Transverse colon (tissue), 4 donors: ENCODE measurements at regions of chr17 and their contacts with region 1.

Region 1: GRCh38 chr17:16129441-16130205 is 85.7 kb downstream of the NCOR1 start:
- DNase-seq: no peak
- H3K4me3 ChIP-seq: no peak overlapping the region
- H3K27ac ChIP-seq: no peak overlapping the region
- H3K4me1 ChIP-seq: peaks cover 0 to 3% (median 0%) of the 10 kb centered on the region in 4 donors
- H3K27me3 ChIP-seq: no peaks in the 10 kb centered on the region
- CTCF ChIP-seq: no peak
- EP300 ChIP-seq: no peak
- POLR2A ChIP-seq: no peak

Region 2: DNA sequence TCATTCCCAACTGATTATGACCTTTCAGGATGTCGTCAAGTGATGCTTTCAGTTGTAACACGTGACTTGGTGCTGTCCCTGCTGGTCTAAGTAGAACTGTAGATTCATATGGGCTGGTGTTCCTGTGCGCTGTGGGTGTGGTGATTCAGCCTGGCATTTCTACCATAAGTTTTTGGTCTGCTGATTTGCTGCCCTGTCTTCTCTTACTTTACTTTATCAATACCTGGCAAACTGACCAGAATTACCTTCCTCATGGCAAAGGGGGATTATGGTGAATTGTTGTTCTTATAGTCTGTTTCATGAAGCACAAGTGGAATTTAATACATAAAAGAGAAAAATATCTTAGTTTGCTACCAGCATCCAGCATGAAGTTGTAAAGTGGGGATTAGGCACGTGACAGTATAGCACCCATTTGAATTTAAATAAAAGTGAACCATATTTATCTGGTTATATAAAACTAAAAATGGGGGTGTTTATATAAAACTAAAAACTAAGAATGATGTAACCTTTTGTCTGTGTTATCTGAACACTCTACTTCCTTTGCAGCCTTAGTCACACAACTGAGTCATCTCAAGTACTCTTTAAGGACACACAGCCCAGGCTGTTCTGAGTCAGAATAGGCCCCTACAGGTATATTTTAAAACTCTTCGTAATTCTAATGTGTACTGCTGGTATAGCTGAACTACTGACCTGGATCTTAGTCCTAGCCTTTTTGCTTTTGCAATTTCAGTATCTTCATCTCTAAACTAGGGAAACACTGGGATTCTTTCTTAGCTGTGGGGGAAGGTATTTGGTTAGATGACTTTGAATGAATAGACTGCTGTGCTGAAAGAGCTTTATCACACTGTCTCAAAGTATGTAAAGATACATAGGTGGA is 101.7 kb before region 1 on chr17:
- in situ Hi-C with region 1: loop called in 2 of 4 experiments (anchors 25 kb)
- intact Hi-C with region 1: no loop called
- DNase-seq: no peak
- H3K4me3 ChIP-seq: no peak overlapping the region
- H3K27ac ChIP-seq: peak overlapping the region; percentile 9 to 49 (median 36)
- H3K4me1 ChIP-seq: peaks cover 0 to 9% (median 0%) of the 10 kb centered on the region in 4 donors
- H3K27me3 ChIP-seq: no peaks in the 10 kb centered on the region
- CTCF ChIP-seq: no peak
- EP300 ChIP-seq: no peak
- POLR2A ChIP-seq: no peak